CD8-positive, alpha-beta T cell (primary cell): ENCODE measurements at regions of chr7 and their contacts with region 1.

Region 1: DNA sequence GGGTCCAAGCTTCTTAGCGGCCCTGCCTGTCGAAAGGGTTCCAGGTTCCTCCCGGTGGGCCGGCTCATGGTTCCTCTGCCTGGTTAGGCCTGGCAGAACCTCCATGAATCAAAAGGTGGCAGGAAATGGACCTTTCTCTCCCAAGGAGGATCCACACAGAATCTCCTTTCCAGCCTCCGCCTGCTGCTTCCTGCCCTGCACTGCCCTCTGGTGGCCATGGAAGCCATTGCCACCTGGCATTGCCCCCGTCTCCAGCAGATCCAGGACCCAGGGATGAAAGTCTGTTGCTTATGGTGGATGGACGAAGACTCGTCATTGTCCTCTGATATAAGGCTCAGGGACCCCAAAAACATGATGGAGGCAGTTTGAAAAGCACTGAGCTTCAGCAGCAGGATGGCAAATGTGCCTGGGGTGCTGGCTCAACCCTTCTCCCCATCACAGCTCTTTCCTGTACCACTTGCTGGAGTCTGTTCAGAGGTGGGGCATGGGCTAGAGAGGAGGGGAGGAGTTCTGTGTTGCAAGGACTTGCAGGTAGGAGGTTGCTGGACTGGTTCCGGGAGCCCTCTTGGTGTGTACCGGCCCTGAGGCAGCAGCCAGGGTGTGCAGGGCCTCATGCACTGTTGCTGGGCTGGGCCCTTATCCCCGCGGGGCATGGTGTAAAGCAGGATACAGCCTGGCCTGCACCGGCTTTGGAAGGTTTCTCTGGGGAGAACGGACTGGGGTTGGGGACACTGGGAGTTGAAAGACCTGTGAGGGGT is 11.3 kb upstream of the INMT start:
- DNase-seq: peak; percentile 51 to 91 (median 78)
- ATAC-seq: peak; percentile 57
- H3K4me3 ChIP-seq: no peak overlapping the region
- H3K4me3 Mint-ChIP-seq: no peak overlapping the region
- H3K27ac ChIP-seq: no peak overlapping the region
- H3K27ac Mint-ChIP-seq: peak overlapping the region; percentile 24
- H3K4me1 ChIP-seq: peaks cover 38% of the 10 kb centered on the region
- H3K4me1 Mint-ChIP-seq: peaks cover 37% of the 10 kb centered on the region
- H3K27me3 ChIP-seq: no peaks in the 10 kb centered on the region
- H3K27me3 Mint-ChIP-seq: no peaks in the 10 kb centered on the region
- CTCF ChIP-seq: peak; percentile 99

Region 2: DNA sequence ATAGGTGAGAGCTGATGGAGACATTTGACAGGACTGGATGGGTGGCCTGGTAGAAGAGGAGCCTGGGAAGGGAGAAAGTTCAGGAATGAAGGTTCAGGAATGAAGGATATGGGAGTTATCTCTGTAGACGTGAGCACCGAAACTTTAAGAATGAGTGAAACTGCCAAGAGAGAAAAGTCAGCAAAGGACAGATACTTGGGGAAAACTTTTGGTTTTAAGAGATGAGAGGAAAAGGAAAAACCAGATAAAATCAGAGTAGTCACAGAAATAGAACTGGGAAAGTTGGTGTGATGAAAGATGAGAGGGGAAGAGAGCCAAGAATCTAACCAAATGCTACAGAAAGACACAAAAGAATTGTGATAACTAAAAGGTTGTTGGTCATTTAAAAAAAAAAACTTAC is 1088.0 kb before region 1 on chr7:
- CTCF ChIA-PET with region 1: no interaction called
- POLR2A ChIA-PET with region 1: no interaction called
- intact Hi-C with region 1: no loop called
- DNase-seq: no peak
- ATAC-seq: no peak
- H3K4me3 ChIP-seq: no peak overlapping the region
- H3K4me3 Mint-ChIP-seq: no peak overlapping the region
- H3K27ac ChIP-seq: no peak overlapping the region
- H3K27ac Mint-ChIP-seq: no peak overlapping the region
- H3K4me1 ChIP-seq: no peaks in the 10 kb centered on the region
- H3K4me1 Mint-ChIP-seq: no peaks in the 10 kb centered on the region
- H3K27me3 ChIP-seq: no peaks in the 10 kb centered on the region
- H3K27me3 Mint-ChIP-seq: no peaks in the 10 kb centered on the region
- CTCF ChIP-seq: no peak

Region 3: GRCh38 chr7:30510124-30511075 is 230.2 kb before region 1 on chr7:
- CTCF ChIA-PET with region 1: interaction called, 4 read pairs
- POLR2A ChIA-PET with region 1: no interaction called
- intact Hi-C with region 1: loop called in 1 of 2 experiments (anchors 2 kb)
- DNase-seq: peak in 6 of 9 experiments; percentile 9 to 58 (median 36)
- ATAC-seq: peak; percentile 75
- H3K4me3 ChIP-seq: no peak overlapping the region
- H3K4me3 Mint-ChIP-seq: no peak overlapping the region
- H3K27ac ChIP-seq: no peak overlapping the region
- H3K27ac Mint-ChIP-seq: no peak overlapping the region
- H3K4me1 ChIP-seq: peaks cover 2% of the 10 kb centered on the region
- H3K4me1 Mint-ChIP-seq: peaks cover 3% of the 10 kb centered on the region
- H3K27me3 ChIP-seq: no peaks in the 10 kb centered on the region
- H3K27me3 Mint-ChIP-seq: no peaks in the 10 kb centered on the region
- CTCF ChIP-seq: peak; percentile 91

Region 4: GRCh38 chr7:30531286-30531685 is 209.3 kb before region 1 on chr7:
- CTCF ChIA-PET with region 1: no interaction called
- POLR2A ChIA-PET with region 1: no interaction called
- intact Hi-C with region 1: no loop called
- DNase-seq: no peak
- ATAC-seq: no peak
- H3K4me3 ChIP-seq: no peak overlapping the region
- H3K4me3 Mint-ChIP-seq: no peak overlapping the region
- H3K27ac ChIP-seq: no peak overlapping the region
- H3K27ac Mint-ChIP-seq: no peak overlapping the region
- H3K4me1 ChIP-seq: no peaks in the 10 kb centered on the region
- H3K4me1 Mint-ChIP-seq: no peaks in the 10 kb centered on the region
- H3K27me3 ChIP-seq: no peaks in the 10 kb centered on the region
- H3K27me3 Mint-ChIP-seq: no peaks in the 10 kb centered on the region
- CTCF ChIP-seq: no peak

Region 5: GRCh38 chr7:30594549-30595435 is 145.8 kb before region 1 on chr7 and contains the start of gene GARS1:
- CTCF ChIA-PET with region 1: interaction called, 5 read pairs
- POLR2A ChIA-PET with region 1: interaction called, 4 read pairs
- intact Hi-C with region 1: loop called in 1 of 2 experiments (anchors 2 kb)
- DNase-seq: peak; percentile 81 to 95 (median 89)
- ATAC-seq: peak; percentile 83
- H3K4me3 ChIP-seq: peak within 1 kb of the TSS; percentile 72 to 87
- H3K4me3 Mint-ChIP-seq: peak within 1 kb of the TSS; percentile 99
- H3K27ac ChIP-seq: peak within 1 kb of the TSS; percentile 90 to 93
- H3K27ac Mint-ChIP-seq: peak within 1 kb of the TSS; percentile 99
- H3K4me1 ChIP-seq: peaks cover 36% of the 10 kb centered on the region
- H3K4me1 Mint-ChIP-seq: peaks cover 73% of the 10 kb centered on the region
- H3K27me3 ChIP-seq: no peaks in the 10 kb centered on the region
- H3K27me3 Mint-ChIP-seq: no peaks in the 10 kb centered on the region
- CTCF ChIP-seq: no peak
- total RNA-seq, gene GARS1: 119 to 121 TPM

Region 6: GRCh38 chr7:30674420-30674819 is 66.2 kb before region 1 on chr7:
- CTCF ChIA-PET with region 1: interaction called, 151 read pairs
- POLR2A ChIA-PET with region 1: no interaction called
- intact Hi-C with region 1: no loop called
- DNase-seq: no peak
- ATAC-seq: no peak
- H3K4me3 ChIP-seq: no peak overlapping the region
- H3K4me3 Mint-ChIP-seq: no peak overlapping the region
- H3K27ac ChIP-seq: no peak overlapping the region
- H3K27ac Mint-ChIP-seq: no peak overlapping the region
- H3K4me1 ChIP-seq: no peaks in the 10 kb centered on the region
- H3K4me1 Mint-ChIP-seq: no peaks in the 10 kb centered on the region
- H3K27me3 ChIP-seq: peaks cover 0 to 2% of the 10 kb centered on the region in 2 experiments
- H3K27me3 Mint-ChIP-seq: peaks cover 22% of the 10 kb centered on the region
- CTCF ChIP-seq: no peak

Region 7: GRCh38 chr7:30702200-30702599 is 38.4 kb before region 1 on chr7:
- CTCF ChIA-PET with region 1: interaction called, 107 read pairs
- POLR2A ChIA-PET with region 1: no interaction called
- intact Hi-C with region 1: loop called (anchors 1 kb)
- DNase-seq: peak in 6 of 9 experiments; percentile 12 to 62 (median 30)
- ATAC-seq: no peak
- H3K4me3 ChIP-seq: no peak overlapping the region
- H3K4me3 Mint-ChIP-seq: no peak overlapping the region
- H3K27ac ChIP-seq: no peak overlapping the region
- H3K27ac Mint-ChIP-seq: no peak overlapping the region
- H3K4me1 ChIP-seq: no peaks in the 10 kb centered on the region
- H3K4me1 Mint-ChIP-seq: peaks cover 6% of the 10 kb centered on the region
- H3K27me3 ChIP-seq: no peaks in the 10 kb centered on the region
- H3K27me3 Mint-ChIP-seq: no peaks in the 10 kb centered on the region
- CTCF ChIP-seq: no peak

Region 8: DNA sequence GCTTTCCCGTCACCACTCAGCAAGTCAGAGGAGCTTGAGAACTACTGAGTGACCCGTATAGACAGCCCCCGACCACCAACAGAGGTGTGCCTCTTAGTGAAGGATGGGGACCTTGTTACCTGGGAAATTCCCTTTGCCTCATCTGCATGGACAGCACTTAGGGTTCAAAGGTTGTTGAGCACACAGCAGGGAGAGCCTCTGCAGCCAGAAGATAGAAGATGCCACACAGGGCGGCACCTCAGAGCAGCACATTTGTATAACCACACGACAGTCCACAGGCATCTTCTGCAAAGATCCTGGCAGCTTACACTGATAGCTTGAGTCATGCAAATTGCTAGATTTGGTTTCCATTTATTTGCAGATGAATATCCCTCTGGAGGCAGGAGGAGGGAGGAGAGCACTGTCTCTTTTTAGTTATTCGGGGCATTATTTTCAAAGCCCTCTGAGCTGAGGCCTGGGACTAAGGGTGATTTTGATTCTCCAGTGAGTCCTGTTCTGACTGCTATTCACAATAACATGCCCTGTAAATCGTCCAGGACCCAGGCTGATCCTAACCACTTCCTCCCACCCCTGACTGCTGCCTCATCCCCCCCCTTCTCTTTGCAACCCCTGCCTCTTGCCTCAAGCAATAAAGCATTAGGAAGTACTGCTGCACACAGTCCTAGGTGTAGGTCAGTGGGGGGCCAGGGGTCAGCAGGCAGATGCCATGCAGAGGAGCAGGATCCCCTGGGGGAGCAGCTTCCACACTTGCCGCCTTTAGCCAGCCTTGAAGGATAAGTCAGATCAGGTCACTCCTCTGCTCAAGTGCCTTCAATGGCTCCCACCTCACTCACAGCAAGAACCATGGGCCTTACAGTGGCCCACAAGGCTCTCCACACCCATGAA is 13.3 kb before region 1 on chr7:
- CTCF ChIA-PET with region 1: interaction called, 228 read pairs
- POLR2A ChIA-PET with region 1: interaction called, 55 read pairs
- intact Hi-C with region 1: loop called (anchors 1 kb)
- DNase-seq: peak; percentile 21 to 83 (median 64)
- ATAC-seq: peak; percentile 91
- H3K4me3 ChIP-seq: peak overlapping the region; percentile 49 to 53
- H3K4me3 Mint-ChIP-seq: peak overlapping the region; percentile 85
- H3K27ac ChIP-seq: peak overlapping the region; percentile 55 to 68
- H3K27ac Mint-ChIP-seq: peak overlapping the region; percentile 94
- H3K4me1 ChIP-seq: peaks cover 49% of the 10 kb centered on the region
- H3K4me1 Mint-ChIP-seq: peaks cover 75% of the 10 kb centered on the region
- H3K27me3 ChIP-seq: no peaks in the 10 kb centered on the region
- H3K27me3 Mint-ChIP-seq: no peaks in the 10 kb centered on the region
- CTCF ChIP-seq: no peak